ENCODE measurements at regions of chr20 and their contacts with region 1.

Region 1: DNA sequence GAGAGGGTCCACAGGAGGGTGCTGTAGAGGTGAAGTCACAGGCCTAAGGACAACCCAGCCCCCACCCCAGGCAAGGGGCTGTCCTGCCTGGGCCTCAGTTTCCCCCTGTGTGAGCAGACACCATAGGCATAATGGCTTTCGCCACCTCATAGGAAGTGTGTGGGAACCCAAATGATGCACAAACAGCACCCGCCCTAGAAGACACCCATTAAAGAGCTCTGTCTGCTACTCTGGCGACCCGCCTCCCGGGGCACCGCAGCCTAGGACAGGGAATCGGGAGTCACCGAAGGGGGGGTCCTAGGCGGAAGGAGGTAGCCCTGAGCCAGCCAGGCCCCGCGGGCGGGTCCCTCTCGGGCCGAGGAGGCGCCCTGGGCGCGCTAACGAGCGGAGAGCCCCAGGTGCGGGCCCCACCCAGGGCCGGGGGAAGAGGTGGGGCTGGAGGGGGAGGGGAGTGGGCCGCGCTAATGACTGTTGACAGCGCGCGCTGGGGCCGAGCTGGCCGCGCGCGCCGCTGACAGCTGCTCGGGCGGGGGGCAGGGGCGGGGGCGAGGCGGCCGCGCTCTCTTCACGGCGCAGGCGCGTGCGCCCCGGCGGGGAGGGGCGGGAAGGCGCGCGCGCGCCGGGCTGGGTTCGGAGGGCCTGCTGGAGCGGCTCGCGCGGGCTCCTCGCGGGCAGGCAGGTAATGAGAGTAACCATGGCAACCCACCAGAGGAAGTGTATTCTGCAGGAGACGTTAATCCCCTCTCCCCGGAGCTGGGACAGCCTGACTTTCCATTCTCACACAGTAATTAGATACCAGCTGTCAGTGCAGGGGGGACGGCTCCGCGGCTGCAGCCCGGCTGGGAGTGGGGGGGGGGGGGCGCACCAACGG is 48.9 kb downstream of the NOL4L start:
- DNase-seq: peak; percentile 59 to 91 (median 78)
- ATAC-seq: peak; percentile 77
- H3K4me3 ChIP-seq: peak overlapping the region; percentile 77
- H3K4me3 Mint-ChIP-seq: peak overlapping the region; percentile 82 to 99 (median 88)
- H3K27ac ChIP-seq: peak overlapping the region; percentile 86
- H3K27ac Mint-ChIP-seq: peak overlapping the region; percentile 84 to 98 (median 95)
- H3K4me1 ChIP-seq: peaks cover 73 to 77% of the 10 kb centered on the region in 2 donors
- H3K4me1 Mint-ChIP-seq: peaks cover 61 to 87% (median 84%) of the 10 kb centered on the region in 7 donors
- H3K27me3 ChIP-seq: no peaks in the 10 kb centered on the region
- H3K27me3 Mint-ChIP-seq: no peaks in the 10 kb centered on the region

Region 2: DNA sequence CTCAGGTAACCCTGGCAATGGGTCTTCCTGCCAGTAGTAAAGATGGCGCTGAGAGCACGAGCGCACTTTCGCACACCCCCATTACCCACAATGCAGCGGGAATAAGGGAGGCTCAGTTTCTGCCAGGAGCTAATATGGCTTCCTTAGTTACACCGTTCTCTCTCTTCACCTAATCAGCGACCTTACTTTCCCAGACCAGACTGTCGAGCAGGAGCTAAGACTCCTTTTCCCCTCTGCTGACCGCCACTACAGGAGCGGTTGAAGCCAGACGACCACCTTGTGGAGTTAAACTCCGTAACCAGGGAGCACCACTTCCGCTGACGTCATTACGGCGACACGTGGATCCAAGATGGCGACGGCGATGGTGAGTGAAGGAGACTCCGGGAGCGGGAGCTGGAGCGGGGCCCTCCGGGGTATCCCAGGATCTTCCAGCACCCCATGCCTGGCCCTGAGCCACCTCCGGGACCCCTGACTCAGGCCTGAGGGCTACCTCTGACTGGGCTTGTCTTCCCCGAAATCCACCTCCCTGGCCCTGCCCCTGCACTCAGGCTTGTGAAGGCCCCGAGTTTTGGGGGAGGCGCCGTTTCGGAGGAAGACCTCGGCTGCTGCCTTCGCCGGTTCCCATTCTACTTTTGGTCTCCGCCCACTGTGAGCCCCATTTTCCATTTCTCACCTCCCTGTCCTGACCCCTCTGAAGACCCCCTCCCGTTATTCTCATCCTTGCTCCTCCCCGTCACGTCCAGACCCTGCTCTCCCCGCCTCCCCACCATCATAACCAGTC is 426.6 kb before region 1 on chr20 and contains the start of gene TM9SF4:
- CTCF ChIA-PET with region 1: interaction called, 3 read pairs
- POLR2A ChIA-PET with region 1: no interaction called
- intact Hi-C with region 1: loop called in 1 of 2 experiments (anchors 10 kb)
- DNase-seq: peak; percentile 87 to 96 (median 93)
- ATAC-seq: peak; percentile 92
- H3K4me3 ChIP-seq: peak within 1 kb of the TSS; percentile 92
- H3K4me3 Mint-ChIP-seq: peak within 1 kb of the TSS; percentile 78 to 100 (median 96)
- H3K27ac ChIP-seq: peak within 1 kb of the TSS; percentile 94
- H3K27ac Mint-ChIP-seq: peak within 1 kb of the TSS; percentile 95 to 100 (median 100)
- H3K4me1 ChIP-seq: peaks cover 11% of the 10 kb centered on the region in 2 donors
- H3K4me1 Mint-ChIP-seq: peaks cover 26 to 44% (median 39%) of the 10 kb centered on the region in 7 donors
- H3K27me3 ChIP-seq: no peaks in the 10 kb centered on the region
- H3K27me3 Mint-ChIP-seq: no peaks in the 10 kb centered on the region
- total RNA-seq, gene TM9SF4: 35.2 to 61.0 (median 41.5) TPM

Region 3: GRCh38 chr20:32302507-32302872 is 233.7 kb before region 1 on chr20:
- CTCF ChIA-PET with region 1: no interaction called
- POLR2A ChIA-PET with region 1: no interaction called
- intact Hi-C with region 1: no loop called
- DNase-seq: no peak
- ATAC-seq: no peak
- H3K4me3 ChIP-seq: no peak overlapping the region
- H3K4me3 Mint-ChIP-seq: no peak overlapping the region
- H3K27ac ChIP-seq: no peak overlapping the region
- H3K27ac Mint-ChIP-seq: no peak overlapping the region
- H3K4me1 ChIP-seq: no peaks in the 10 kb centered on the region
- H3K4me1 Mint-ChIP-seq: peaks cover 4 to 32% (median 17%) of the 10 kb centered on the region in 7 donors
- H3K27me3 ChIP-seq: no peaks in the 10 kb centered on the region
- H3K27me3 Mint-ChIP-seq: no peaks in the 10 kb centered on the region

Region 4: GRCh38 chr20:32316667-32317066 is 219.5 kb before region 1 on chr20:
- CTCF ChIA-PET with region 1: no interaction called
- POLR2A ChIA-PET with region 1: no interaction called
- intact Hi-C with region 1: no loop called
- DNase-seq: no peak
- ATAC-seq: no peak
- H3K4me3 ChIP-seq: no peak overlapping the region
- H3K4me3 Mint-ChIP-seq: no peak overlapping the region
- H3K27ac ChIP-seq: no peak overlapping the region
- H3K27ac Mint-ChIP-seq: peak overlapping the region in 2 of 9 donors; percentile 32 to 44
- H3K4me1 ChIP-seq: no peaks in the 10 kb centered on the region
- H3K4me1 Mint-ChIP-seq: peaks cover 0 to 8% (median 0%) of the 10 kb centered on the region in 7 donors
- H3K27me3 ChIP-seq: no peaks in the 10 kb centered on the region
- H3K27me3 Mint-ChIP-seq: no peaks in the 10 kb centered on the region

Region 5: GRCh38 chr20:32521780-32522525 is 14.2 kb before region 1 on chr20:
- CTCF ChIA-PET with region 1: interaction called, 320 read pairs
- POLR2A ChIA-PET with region 1: interaction called, 623 read pairs
- intact Hi-C with region 1: loop called (anchors 1 to 2 kb)
- DNase-seq: peak; percentile 50 to 76 (median 63)
- ATAC-seq: peak; percentile 89
- H3K4me3 ChIP-seq: peak overlapping the region; percentile 27
- H3K4me3 Mint-ChIP-seq: peak overlapping the region in 9 of 10 donors; percentile 17 to 72 (median 53)
- H3K27ac ChIP-seq: peak overlapping the region; percentile 60
- H3K27ac Mint-ChIP-seq: peak overlapping the region; percentile 63 to 95 (median 90)
- H3K4me1 ChIP-seq: peaks cover 36 to 65% of the 10 kb centered on the region in 2 donors
- H3K4me1 Mint-ChIP-seq: peaks cover 39 to 77% (median 67%) of the 10 kb centered on the region in 7 donors
- H3K27me3 ChIP-seq: no peaks in the 10 kb centered on the region
- H3K27me3 Mint-ChIP-seq: no peaks in the 10 kb centered on the region

Region 6: DNA sequence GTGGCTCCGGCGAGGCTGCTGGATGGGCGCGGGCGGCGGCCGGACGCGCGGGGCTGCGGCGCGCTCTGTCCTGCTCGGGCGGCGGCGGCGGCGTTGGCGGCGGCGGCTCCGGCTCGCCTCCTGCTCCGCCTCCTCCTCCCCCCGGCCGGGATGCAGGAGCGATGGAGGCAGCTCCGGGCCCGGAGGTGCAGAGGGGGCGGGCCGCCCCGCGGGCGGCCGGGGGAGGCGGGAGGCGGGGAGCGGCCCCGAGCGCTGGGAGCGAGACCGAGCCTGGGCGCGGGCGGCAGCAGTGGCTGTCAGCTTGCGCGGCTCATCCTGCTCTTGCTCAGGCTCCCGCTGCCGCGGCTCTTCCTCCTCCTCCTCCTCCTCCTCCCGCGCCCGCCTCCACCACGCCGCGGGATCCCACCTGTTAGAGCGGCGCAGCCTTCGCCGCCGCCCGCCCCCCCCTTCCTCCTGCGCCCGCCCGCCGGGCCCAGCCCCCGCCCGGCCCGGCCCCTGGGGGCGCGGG is 48.9 kb after region 1 on chr20 and contains the start of gene NOL4L:
- CTCF ChIA-PET with region 1: interaction called, 14 read pairs
- POLR2A ChIA-PET with region 1: interaction called, 63 read pairs
- intact Hi-C with region 1: loop called (anchors 1 kb)
- DNase-seq: peak in 4 of 9 donors; percentile 34 to 59 (median 45)
- ATAC-seq: peak; percentile 30
- H3K4me3 ChIP-seq: peak within 1 kb of the TSS; percentile 78
- H3K4me3 Mint-ChIP-seq: peak within 1 kb of the TSS; percentile 89 to 97 (median 93)
- H3K27ac ChIP-seq: peak within 1 kb of the TSS; percentile 70
- H3K27ac Mint-ChIP-seq: peak within 1 kb of the TSS; percentile 78 to 97 (median 91)
- H3K4me1 ChIP-seq: peaks cover 9 to 37% of the 10 kb centered on the region in 2 donors
- H3K4me1 Mint-ChIP-seq: peaks cover 21 to 48% (median 38%) of the 10 kb centered on the region in 7 donors
- H3K27me3 ChIP-seq: no peaks in the 10 kb centered on the region
- H3K27me3 Mint-ChIP-seq: peaks cover 0 to 28% (median 0%) of the 10 kb centered on the region in 5 donors
- total RNA-seq, gene NOL4L: 29.4 to 81.9 (median 74.6) TPM

Region 7: GRCh38 chr20:32628960-32629530 is 92.9 kb after region 1 on chr20:
- CTCF ChIA-PET with region 1: no interaction called
- POLR2A ChIA-PET with region 1: no interaction called
- intact Hi-C with region 1: no loop called
- DNase-seq: no peak
- ATAC-seq: no peak
- H3K4me3 ChIP-seq: no peak overlapping the region
- H3K4me3 Mint-ChIP-seq: no peak overlapping the region
- H3K27ac ChIP-seq: no peak overlapping the region
- H3K27ac Mint-ChIP-seq: no peak overlapping the region
- H3K4me1 ChIP-seq: peaks cover 0 to 8% of the 10 kb centered on the region in 2 donors
- H3K4me1 Mint-ChIP-seq: peaks cover 0 to 16% (median 7%) of the 10 kb centered on the region in 7 donors
- H3K27me3 ChIP-seq: no peaks in the 10 kb centered on the region
- H3K27me3 Mint-ChIP-seq: peaks cover 0 to 2% (median 0%) of the 10 kb centered on the region in 5 donors

Region 8: DNA sequence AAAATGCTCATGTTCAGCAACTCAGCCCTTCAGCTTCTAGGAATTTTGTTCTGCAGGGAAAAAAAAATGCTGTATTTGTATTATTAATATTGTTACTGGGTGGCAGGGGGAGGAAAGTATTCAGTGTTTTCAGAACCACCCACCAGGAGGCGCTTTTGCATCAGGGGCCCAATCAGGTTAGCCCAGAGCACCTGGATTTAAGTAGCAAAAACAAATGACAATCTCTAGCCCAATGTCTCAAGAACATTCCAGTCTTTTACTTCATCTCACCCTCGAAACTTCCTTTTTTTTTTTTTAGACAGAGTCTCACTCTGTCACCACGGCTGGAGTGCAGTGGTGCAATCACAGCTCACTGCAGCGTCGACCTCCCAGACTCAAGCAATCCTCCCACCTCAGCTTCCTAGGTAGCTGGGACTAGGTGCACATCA is 138.2 kb after region 1 on chr20:
- CTCF ChIA-PET with region 1: no interaction called
- POLR2A ChIA-PET with region 1: no interaction called
- intact Hi-C with region 1: no loop called
- DNase-seq: peak; percentile 37 to 74 (median 65)
- ATAC-seq: peak; percentile 68
- H3K4me3 ChIP-seq: no peak overlapping the region
- H3K4me3 Mint-ChIP-seq: peak overlapping the region in 2 of 10 donors; percentile 21 to 38
- H3K27ac ChIP-seq: no peak overlapping the region
- H3K27ac Mint-ChIP-seq: peak overlapping the region in 3 of 9 donors; percentile 15 to 42 (median 29)
- H3K4me1 ChIP-seq: peaks cover 9 to 14% of the 10 kb centered on the region in 2 donors
- H3K4me1 Mint-ChIP-seq: peaks cover 6 to 40% (median 29%) of the 10 kb centered on the region in 7 donors
- H3K27me3 ChIP-seq: no peaks in the 10 kb centered on the region
- H3K27me3 Mint-ChIP-seq: peaks cover 0 to 5% (median 0%) of the 10 kb centered on the region in 5 donors

Region 9: GRCh38 chr20:32779500-32780211 is 243.5 kb after region 1 on chr20:
- CTCF ChIA-PET with region 1: no interaction called
- POLR2A ChIA-PET with region 1: no interaction called
- intact Hi-C with region 1: loop called in 1 of 2 experiments (anchors 10 kb)
- DNase-seq: no peak
- ATAC-seq: no peak
- H3K4me3 ChIP-seq: no peak overlapping the region
- H3K4me3 Mint-ChIP-seq: no peak overlapping the region
- H3K27ac ChIP-seq: no peak overlapping the region
- H3K27ac Mint-ChIP-seq: no peak overlapping the region
- H3K4me1 ChIP-seq: no peaks in the 10 kb centered on the region
- H3K4me1 Mint-ChIP-seq: peaks cover 3 to 36% (median 32%) of the 10 kb centered on the region in 7 donors
- H3K27me3 ChIP-seq: no peaks in the 10 kb centered on the region
- H3K27me3 Mint-ChIP-seq: no peaks in the 10 kb centered on the region

Region 10: GRCh38 chr20:33489495-33490022 is 953.4 kb after region 1 on chr20:
- CTCF ChIA-PET with region 1: no interaction called
- POLR2A ChIA-PET with region 1: interaction called, 4 read pairs
- intact Hi-C with region 1: loop called in 1 of 2 experiments (anchors 5 kb)
- DNase-seq: peak; percentile 97 to 99 (median 99)
- ATAC-seq: peak; percentile 97
- H3K4me3 ChIP-seq: peak overlapping the region; percentile 75
- H3K4me3 Mint-ChIP-seq: peak overlapping the region; percentile 84 to 95 (median 88)
- H3K27ac ChIP-seq: peak overlapping the region; percentile 94
- H3K27ac Mint-ChIP-seq: peak overlapping the region; percentile 86 to 96 (median 90)
- H3K4me1 ChIP-seq: peaks cover 4 to 9% of the 10 kb centered on the region in 2 donors
- H3K4me1 Mint-ChIP-seq: peaks cover 0 to 30% (median 13%) of the 10 kb centered on the region in 7 donors
- H3K27me3 ChIP-seq: no peaks in the 10 kb centered on the region
- H3K27me3 Mint-ChIP-seq: no peaks in the 10 kb centered on the region